Common myeloid progenitor, CD34-positive (primary cell): ENCODE measurements at regions of chr3 and their contacts with region 1.

Region 1: GRCh38 chr3:98602078-98602678 is 8.8 kb upstream of the CPOX start:
- DNase-seq: peak; percentile 61 to 75 (median 74)
- H3K4me3 ChIP-seq: no peak overlapping the region
- H3K27ac ChIP-seq: no peak overlapping the region
- H3K4me1 ChIP-seq: peaks cover 0 to 16% (median 6%) of the 10 kb centered on the region in 4 experiments
- H3K27me3 ChIP-seq: no peaks in the 10 kb centered on the region

Region 2: GRCh38 chr3:98282205-98282604 is 320.0 kb before region 1 on chr3 and contains the start of gene OR5H2:
- CTCF ChIA-PET with region 1: no interaction called
- POLR2A ChIA-PET with region 1: no interaction called
- DNase-seq: no peak
- H3K4me3 ChIP-seq: no peak within 1 kb of the TSS
- H3K27ac ChIP-seq: no peak within 1 kb of the TSS
- H3K4me1 ChIP-seq: no peaks in the 10 kb centered on the region
- H3K27me3 ChIP-seq: no peaks in the 10 kb centered on the region

Region 3: GRCh38 chr3:98612587-98612986 is 10.4 kb after region 1 on chr3:
- CTCF ChIA-PET with region 1: interaction called, 18 read pairs
- POLR2A ChIA-PET with region 1: no interaction called
- DNase-seq: no peak
- H3K4me3 ChIP-seq: no peak overlapping the region
- H3K27ac ChIP-seq: no peak overlapping the region
- H3K4me1 ChIP-seq: peaks cover 0 to 3% (median 0%) of the 10 kb centered on the region in 4 experiments
- H3K27me3 ChIP-seq: no peaks in the 10 kb centered on the region

Region 4: DNA sequence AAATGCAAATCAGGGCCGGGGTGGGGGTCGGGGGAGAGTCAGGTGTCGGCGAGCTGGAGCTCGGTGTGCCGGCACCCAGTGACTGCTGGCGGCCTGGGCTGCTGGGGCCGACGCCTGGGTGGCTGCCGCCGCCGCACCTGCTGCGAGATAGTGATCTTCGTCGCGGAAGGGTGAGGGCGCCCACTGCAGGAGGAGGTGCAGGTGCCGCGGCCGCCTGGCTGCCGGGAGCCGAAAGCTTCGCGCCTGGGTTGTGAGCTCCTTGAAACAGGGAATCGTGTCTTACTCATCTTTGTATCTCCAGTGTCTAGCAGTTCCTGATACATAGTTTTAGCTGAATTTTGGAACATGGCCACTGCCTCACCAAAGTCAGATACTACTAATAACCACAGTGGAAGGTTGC is 55.3 kb after region 1 on chr3:
- CTCF ChIA-PET with region 1: interaction called, 19 read pairs
- POLR2A ChIA-PET with region 1: no interaction called
- DNase-seq: peak; percentile 18 to 68 (median 20)
- H3K4me3 ChIP-seq: peak overlapping the region in 5 of 7 experiments; percentile 15 to 53 (median 28)
- H3K27ac ChIP-seq: no peak overlapping the region
- H3K4me1 ChIP-seq: peaks cover 0 to 9% (median 4%) of the 10 kb centered on the region in 4 experiments
- H3K27me3 ChIP-seq: peaks cover 0 to 9% (median 0%) of the 10 kb centered on the region in 5 experiments

Region 5: GRCh38 chr3:98788651-98789050 is 186.5 kb after region 1 on chr3:
- CTCF ChIA-PET with region 1: interaction called, 11 read pairs
- POLR2A ChIA-PET with region 1: no interaction called
- DNase-seq: peak in 2 of 3 donors; percentile 56 to 58
- H3K4me3 ChIP-seq: peak overlapping the region in 1 of 7 experiments; percentile 50
- H3K27ac ChIP-seq: peak overlapping the region in 1 of 2 experiments; percentile 46
- H3K4me1 ChIP-seq: peaks cover 16 to 62% (median 36%) of the 10 kb centered on the region in 4 experiments
- H3K27me3 ChIP-seq: no peaks in the 10 kb centered on the region